A549 (cell line): ENCODE measurements at regions of chr19 and their contacts with region 1.

Region 1: GRCh38 chr19:53394974-53395839 is at the start of gene ZNF765:
- DNase-seq: peak; percentile 73 to 93
- ATAC-seq: peak; percentile 98 to 99
- H3K4me3 ChIP-seq: peak within 1 kb of the TSS; percentile 99
- H3K27ac ChIP-seq: peak within 1 kb of the TSS; percentile 80 to 85
- H3K4me1 ChIP-seq: no peaks in the 10 kb centered on the region
- CTCF ChIP-seq: peak; percentile 22; the same call in 2 of the 3 replicates
- EP300 ChIP-seq: no peak
- POLR2A ChIP-seq: peak; percentile 74
- RAD21 ChIP-seq: no peak
- polyA plus RNA-seq, gene ZNF765: 8.3 and 9.0 TPM in 2 replicates

Region 2: DNA sequence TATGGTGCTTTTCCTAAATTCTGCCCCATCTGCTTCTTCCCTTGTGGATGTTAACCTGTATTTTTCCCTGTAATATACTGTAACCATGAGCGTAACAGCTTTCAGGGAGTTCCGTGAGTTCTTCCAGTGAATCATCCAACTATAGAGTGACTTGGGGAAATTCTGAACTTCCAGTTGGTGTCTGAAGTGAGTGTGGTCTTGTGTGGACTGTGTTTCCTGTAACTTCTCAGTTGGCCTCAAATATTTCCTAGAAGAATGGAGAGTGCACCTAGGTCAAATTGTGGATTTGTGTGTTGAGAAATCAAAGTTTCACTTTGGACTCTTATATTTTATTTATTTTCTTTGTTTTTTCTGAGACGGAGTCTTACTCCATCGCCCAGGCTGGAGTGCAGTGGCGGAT is 1136.8 kb before region 1 on chr19:
- CTCF ChIA-PET with region 1: no interaction called
- POLR2A ChIA-PET with region 1: interaction called, 12 read pairs
- DNase-seq: no peak
- ATAC-seq: no peak
- H3K4me3 ChIP-seq: no peak overlapping the region
- H3K27ac ChIP-seq: no peak overlapping the region
- H3K4me1 ChIP-seq: no peaks in the 10 kb centered on the region
- CTCF ChIP-seq: no peak
- EP300 ChIP-seq: no peak
- POLR2A ChIP-seq: no peak
- RAD21 ChIP-seq: no peak

Region 3: DNA sequence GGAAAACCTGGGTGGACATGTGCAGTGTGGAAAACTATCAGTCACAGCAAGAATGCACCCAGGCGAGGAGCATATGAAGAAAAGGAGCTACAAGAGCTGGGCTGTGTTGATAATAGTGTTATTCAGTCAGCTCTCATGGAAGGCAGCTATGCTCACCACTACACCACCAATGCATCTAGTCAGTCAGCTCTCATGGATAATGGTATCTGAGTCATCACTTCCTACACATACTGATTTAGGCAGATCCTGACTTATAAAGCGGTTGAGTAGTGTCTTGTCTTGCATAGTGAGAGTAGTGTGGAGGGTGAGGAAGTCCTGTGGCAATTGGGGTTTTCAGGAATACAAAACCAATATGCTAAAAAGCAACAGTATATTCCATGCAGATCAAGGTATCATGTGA is 282.9 kb before region 1 on chr19:
- CTCF ChIA-PET with region 1: no interaction called
- POLR2A ChIA-PET with region 1: interaction called, 10 read pairs
- DNase-seq: no peak
- ATAC-seq: no peak
- H3K4me3 ChIP-seq: no peak overlapping the region
- H3K27ac ChIP-seq: no peak overlapping the region
- H3K4me1 ChIP-seq: no peaks in the 10 kb centered on the region
- CTCF ChIP-seq: no peak
- EP300 ChIP-seq: no peak
- POLR2A ChIP-seq: no peak
- RAD21 ChIP-seq: no peak

Region 4: GRCh38 chr19:53357821-53358581 is 37.2 kb before region 1 on chr19:
- CTCF ChIA-PET with region 1: no interaction called
- POLR2A ChIA-PET with region 1: no interaction called
- DNase-seq: no peak
- ATAC-seq: no peak; a peak in 1 of 6 replicates
- H3K4me3 ChIP-seq: no peak overlapping the region
- H3K27ac ChIP-seq: no peak overlapping the region
- H3K4me1 ChIP-seq: no peaks in the 10 kb centered on the region
- CTCF ChIP-seq: no peak
- EP300 ChIP-seq: no peak
- POLR2A ChIP-seq: no peak
- RAD21 ChIP-seq: no peak

Region 5: DNA sequence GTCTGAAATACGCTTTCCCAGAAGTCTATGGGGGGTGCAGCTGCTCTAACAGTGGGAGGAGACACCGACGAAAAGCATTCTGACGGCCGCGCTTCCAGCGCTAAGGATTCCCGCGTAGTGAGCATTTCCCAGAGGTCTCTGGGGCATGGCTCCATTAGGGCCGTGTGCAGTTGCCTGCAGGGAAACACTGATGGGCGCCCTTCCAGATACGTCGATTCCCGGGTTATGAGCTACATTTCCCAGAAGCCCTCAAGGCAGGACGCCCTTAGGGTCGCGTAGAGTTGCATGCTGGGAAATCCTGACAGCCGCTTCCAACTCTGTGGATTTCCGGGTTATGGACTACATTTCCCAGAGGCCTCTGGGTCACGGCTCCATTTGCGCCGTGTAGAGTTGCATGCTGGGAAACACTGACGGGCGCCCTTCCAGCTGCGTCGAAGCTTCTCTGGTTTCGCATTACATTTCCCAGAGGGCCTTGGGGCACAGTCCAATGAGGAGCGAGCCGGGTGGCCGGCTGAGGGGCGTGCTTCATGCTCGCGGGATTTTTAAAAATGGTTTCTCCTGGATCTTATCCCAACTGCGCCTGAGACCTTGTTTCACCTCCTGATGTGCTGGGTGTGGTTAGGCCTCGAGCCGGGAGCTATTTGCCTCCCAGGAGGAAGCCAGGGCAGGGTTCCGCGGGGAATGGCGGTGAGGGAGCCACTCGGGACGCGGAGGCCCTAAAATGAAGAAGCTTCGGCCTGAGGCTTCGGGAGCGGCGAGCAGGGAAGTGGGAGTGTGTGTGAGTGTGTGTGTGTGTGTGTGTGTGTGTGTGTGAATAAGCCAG is 125.6 kb after region 1 on chr19:
- CTCF ChIA-PET with region 1: no interaction called
- POLR2A ChIA-PET with region 1: interaction called, 11 read pairs
- DNase-seq: peak; percentile 95 to 99
- ATAC-seq: peak; percentile 98 to 99
- H3K4me3 ChIP-seq: peak overlapping the region; percentile 71
- H3K27ac ChIP-seq: peak overlapping the region; percentile 71 to 84
- H3K4me1 ChIP-seq: 0 out of 3 replicates have a peak, but pooled peaks cover 3% of the 10 kb centered on the region
- CTCF ChIP-seq: no peak
- EP300 ChIP-seq: no peak
- POLR2A ChIP-seq: 0 out of 2 replicates have a peak, but pooled peaks have one; percentile 13
- RAD21 ChIP-seq: no peak